Activated B cell treated with CpG ODN at 0.5 μM for 24 hours (primary cell): ENCODE measurements at regions of chr10 and their contacts with region 1.

Region 1: DNA sequence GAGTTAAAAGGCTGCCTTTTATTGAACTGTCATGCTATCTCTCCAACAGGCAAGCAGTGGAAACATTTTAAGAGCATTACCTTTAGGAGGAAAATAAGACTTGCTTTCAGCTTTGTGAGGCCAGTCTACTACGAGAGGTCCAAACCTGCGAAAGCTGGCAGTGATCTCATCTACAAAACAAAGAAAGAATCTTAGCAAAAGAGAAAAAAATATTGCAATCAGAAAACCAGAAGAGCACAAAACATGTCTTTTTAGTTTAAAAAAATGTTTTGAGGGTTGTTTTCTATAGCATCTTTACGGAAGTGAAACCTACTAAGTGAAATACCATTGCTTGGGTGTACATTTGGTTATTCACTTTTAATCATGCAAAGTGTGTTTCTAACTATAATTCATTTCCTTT is 147.9 kb downstream of the CPEB3 start:
- DNase-seq: no peak
- ATAC-seq: peak; percentile 25
- H3K4me3 Mint-ChIP-seq: peak overlapping the region; percentile 73
- H3K27ac Mint-ChIP-seq: peak overlapping the region; percentile 83
- H3K4me1 Mint-ChIP-seq: peaks cover 61% of the 10 kb centered on the region
- H3K27me3 Mint-ChIP-seq: no peaks in the 10 kb centered on the region
- CTCF ChIP-seq: no peak

Region 2: GRCh38 chr10:91779011-91779605 is 363.8 kb before region 1 on chr10:
- CTCF ChIA-PET with region 1: no interaction called
- POLR2A ChIA-PET with region 1: no interaction called
- intact Hi-C with region 1: no loop called
- DNase-seq: no peak
- ATAC-seq: no peak
- H3K4me3 Mint-ChIP-seq: no peak overlapping the region
- H3K27ac Mint-ChIP-seq: no peak overlapping the region
- H3K4me1 Mint-ChIP-seq: no peaks in the 10 kb centered on the region
- H3K27me3 Mint-ChIP-seq: no peaks in the 10 kb centered on the region
- CTCF ChIP-seq: no peak

Region 3: DNA sequence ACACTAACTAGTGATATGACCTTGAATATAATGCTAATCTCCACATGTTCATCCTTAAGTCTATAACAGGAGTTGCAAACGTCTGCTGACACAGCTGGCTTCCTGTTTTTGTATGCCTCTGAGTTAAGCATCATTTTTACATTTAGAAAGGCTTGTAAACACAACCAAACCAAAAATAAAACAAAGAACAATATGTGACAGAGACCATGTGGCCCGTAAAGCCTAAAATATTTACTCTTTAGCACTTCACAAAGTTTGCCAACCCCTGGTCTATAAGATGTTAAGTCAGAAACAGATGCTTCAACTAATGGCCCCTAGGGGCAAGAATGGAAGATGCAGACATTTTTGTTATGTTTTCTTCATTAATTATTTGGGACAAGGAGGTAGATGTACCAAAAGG is 38.6 kb after region 1 on chr10:
- CTCF ChIA-PET with region 1: no interaction called
- POLR2A ChIA-PET with region 1: no interaction called
- intact Hi-C with region 1: loop called (anchors 5 kb)
- DNase-seq: no peak
- ATAC-seq: no peak
- H3K4me3 Mint-ChIP-seq: no peak overlapping the region
- H3K27ac Mint-ChIP-seq: no peak overlapping the region
- H3K4me1 Mint-ChIP-seq: peaks cover 7% of the 10 kb centered on the region
- H3K27me3 Mint-ChIP-seq: no peaks in the 10 kb centered on the region
- CTCF ChIP-seq: no peak

Region 4: GRCh38 chr10:92208736-92209327 is 65.9 kb after region 1 on chr10:
- CTCF ChIA-PET with region 1: no interaction called
- POLR2A ChIA-PET with region 1: interaction called, 10 read pairs
- intact Hi-C with region 1: loop called (anchors 1 kb)
- DNase-seq: no peak
- ATAC-seq: no peak
- H3K4me3 Mint-ChIP-seq: no peak overlapping the region
- H3K27ac Mint-ChIP-seq: no peak overlapping the region
- H3K4me1 Mint-ChIP-seq: peaks cover 15% of the 10 kb centered on the region
- H3K27me3 Mint-ChIP-seq: no peaks in the 10 kb centered on the region
- CTCF ChIP-seq: no peak

Region 5: GRCh38 chr10:92240289-92241157 is 97.6 kb after region 1 on chr10:
- CTCF ChIA-PET with region 1: no interaction called
- POLR2A ChIA-PET with region 1: interaction called, 6 read pairs
- intact Hi-C with region 1: loop called (anchors 1 kb)
- DNase-seq: peak; percentile 32
- ATAC-seq: peak; percentile 66
- H3K4me3 Mint-ChIP-seq: peak overlapping the region; percentile 96
- H3K27ac Mint-ChIP-seq: peak overlapping the region; percentile 85
- H3K4me1 Mint-ChIP-seq: peaks cover 39% of the 10 kb centered on the region
- H3K27me3 Mint-ChIP-seq: no peaks in the 10 kb centered on the region
- CTCF ChIP-seq: no peak